Sigmoid colon (tissue), 7 donors: ENCODE measurements at regions of chr1 and their contacts with region 1.

Region 1: GRCh38 chr1:28779751-28780408 is 32.1 kb upstream of the OPRD1 start:
- DNase-seq: no peak
- H3K4me3 ChIP-seq: no peak overlapping the region
- H3K27ac ChIP-seq: no peak overlapping the region
- H3K4me1 ChIP-seq: peaks cover 0 to 11% (median 8%) of the 10 kb centered on the region in 4 donors
- H3K27me3 ChIP-seq: no peaks in the 10 kb centered on the region
- CTCF ChIP-seq: no peak
- EP300 ChIP-seq: no peak
- POLR2A ChIP-seq: no peak

Region 2: GRCh38 chr1:28877132-28877781 is 97.4 kb after region 1 on chr1:
- intact Hi-C with region 1: loop called (anchors 1 kb)
- DNase-seq: peak; percentile 84
- H3K4me3 ChIP-seq: no peak overlapping the region
- H3K27ac ChIP-seq: no peak overlapping the region
- H3K4me1 ChIP-seq: peaks cover 0 to 5% (median 2%) of the 10 kb centered on the region in 4 donors
- H3K27me3 ChIP-seq: no peaks in the 10 kb centered on the region
- CTCF ChIP-seq: peak; percentile 80 to 91 (median 86)
- EP300 ChIP-seq: no peak
- POLR2A ChIP-seq: no peak

Region 3: GRCh38 chr1:29033829-29034466 is 254.1 kb after region 1 on chr1:
- intact Hi-C with region 1: loop called (anchors 10 kb)
- DNase-seq: no peak
- H3K4me3 ChIP-seq: no peak overlapping the region
- H3K27ac ChIP-seq: no peak overlapping the region
- H3K4me1 ChIP-seq: peaks cover 0 to 7% (median 0%) of the 10 kb centered on the region in 4 donors
- H3K27me3 ChIP-seq: no peaks in the 10 kb centered on the region
- CTCF ChIP-seq: peak; percentile 29 to 69 (median 64)
- EP300 ChIP-seq: no peak
- POLR2A ChIP-seq: no peak

Region 4: GRCh38 chr1:29202584-29203340 is 422.9 kb after region 1 on chr1:
- intact Hi-C with region 1: loop called (anchors 5 kb)
- DNase-seq: peak; percentile 98
- H3K4me3 ChIP-seq: no peak overlapping the region
- H3K27ac ChIP-seq: peak overlapping the region; percentile 79 to 87 (median 84)
- H3K4me1 ChIP-seq: peaks cover 0 to 13% (median 12%) of the 10 kb centered on the region in 4 donors
- H3K27me3 ChIP-seq: no peaks in the 10 kb centered on the region
- CTCF ChIP-seq: peak; percentile 89 to 96 (median 92)
- EP300 ChIP-seq: no peak
- POLR2A ChIP-seq: no peak